ENCODE measurements at regions of chr15 and their contacts with region 1.

Region 1: DNA sequence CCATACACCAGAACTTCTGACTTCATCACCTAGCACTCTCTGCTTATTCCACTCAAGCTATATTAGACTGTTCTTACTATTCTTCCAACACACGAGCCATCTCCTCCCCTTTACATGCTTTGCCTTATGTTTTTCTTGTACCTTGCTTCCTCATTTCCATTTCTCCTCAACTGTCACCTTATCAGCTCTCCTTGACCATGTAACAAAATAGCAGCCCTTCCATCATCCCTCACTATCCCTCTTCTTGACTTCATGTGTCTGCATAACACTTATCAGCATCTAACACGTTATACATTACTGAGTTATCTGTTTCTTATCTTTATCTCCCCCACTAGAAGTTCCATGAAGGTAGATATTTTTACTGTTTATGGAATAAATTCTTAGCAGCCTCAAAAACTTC is 45.3 kb downstream of the TRPM7 start:
- DNase-seq: no peak
- ATAC-seq: no peak
- H3K4me3 ChIP-seq: no peak overlapping the region
- H3K27ac ChIP-seq: no peak overlapping the region
- H3K4me1 ChIP-seq: peaks cover 0 to 9% (median 0%) of the 10 kb centered on the region in 9 donors
- H3K27me3 ChIP-seq: no peaks in the 10 kb centered on the region
- CTCF ChIP-seq: no peak

Region 2: DNA sequence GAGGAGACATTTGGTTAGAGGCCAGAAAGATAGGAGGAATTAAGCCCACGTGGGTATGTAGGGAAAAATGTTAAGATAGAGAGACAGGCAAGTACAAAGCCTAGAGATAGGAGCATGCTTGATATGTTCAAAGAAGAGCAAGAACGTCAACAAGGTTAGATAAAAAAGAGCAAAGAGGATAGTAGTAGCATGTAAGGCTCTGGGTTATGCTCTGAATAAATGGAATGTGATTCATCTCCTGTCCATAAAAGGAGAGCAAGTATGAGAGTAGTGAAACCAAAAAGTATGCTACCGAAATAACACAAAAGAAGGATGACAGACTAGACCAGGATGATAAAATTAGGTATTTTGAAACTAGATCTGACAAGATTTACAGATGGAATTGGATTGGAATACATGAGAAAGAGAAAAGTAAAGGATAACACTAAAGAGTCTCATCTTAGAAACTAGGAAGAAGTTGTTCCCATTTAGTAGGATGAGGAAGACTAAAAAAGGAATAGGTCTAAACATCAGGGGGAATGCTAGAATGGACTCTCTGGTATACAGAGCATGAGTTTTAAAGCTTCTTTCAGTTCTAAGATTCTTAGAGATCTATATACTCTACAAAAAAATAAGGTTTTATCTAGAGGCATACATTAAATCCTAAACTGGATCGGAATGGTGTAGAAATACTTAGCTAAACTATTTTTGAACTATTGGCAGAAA is 13.8 kb before region 1 on chr15:
- intact Hi-C with region 1: loop called in 1 of 10 experiments (anchors 2 kb)
- DNase-seq: no peak
- ATAC-seq: peak in 1 of 8 donors; percentile 56
- H3K4me3 ChIP-seq: no peak overlapping the region
- H3K27ac ChIP-seq: peak overlapping the region in 4 of 10 donors; percentile 15 to 33 (median 28)
- H3K4me1 ChIP-seq: peaks cover 0 to 14% (median 2%) of the 10 kb centered on the region in 9 donors
- H3K27me3 ChIP-seq: no peaks in the 10 kb centered on the region
- CTCF ChIP-seq: no peak

Measured in heart right ventricle (tissue), 16 donors.